Naive thymus-derived CD4-positive, alpha-beta T cell (primary cell): ENCODE measurements at regions of chr9 and their contacts with region 1.

Region 1: GRCh38 chr9:127802576-127803443 is at the start of gene FPGS:
- DNase-seq: peak; percentile 77 to 86 (median 85)
- ATAC-seq: peak; percentile 94
- H3K4me3 ChIP-seq: peak within 1 kb of the TSS; percentile 81
- H3K4me3 Mint-ChIP-seq: peak within 1 kb of the TSS; percentile 81 to 95 (median 90)
- H3K27ac ChIP-seq: peak within 1 kb of the TSS; percentile 93
- H3K27ac Mint-ChIP-seq: peak within 1 kb of the TSS; percentile 80 to 95 (median 89)
- H3K4me1 ChIP-seq: peaks cover 12 to 19% of the 10 kb centered on the region in 2 donors
- H3K4me1 Mint-ChIP-seq: peaks cover 4 to 31% (median 20%) of the 10 kb centered on the region in 7 donors
- H3K27me3 ChIP-seq: no peaks in the 10 kb centered on the region
- H3K27me3 Mint-ChIP-seq: no peaks in the 10 kb centered on the region
- total RNA-seq, gene FPGS: 90.4 to 123 (median 95.4) TPM

Region 2: DNA sequence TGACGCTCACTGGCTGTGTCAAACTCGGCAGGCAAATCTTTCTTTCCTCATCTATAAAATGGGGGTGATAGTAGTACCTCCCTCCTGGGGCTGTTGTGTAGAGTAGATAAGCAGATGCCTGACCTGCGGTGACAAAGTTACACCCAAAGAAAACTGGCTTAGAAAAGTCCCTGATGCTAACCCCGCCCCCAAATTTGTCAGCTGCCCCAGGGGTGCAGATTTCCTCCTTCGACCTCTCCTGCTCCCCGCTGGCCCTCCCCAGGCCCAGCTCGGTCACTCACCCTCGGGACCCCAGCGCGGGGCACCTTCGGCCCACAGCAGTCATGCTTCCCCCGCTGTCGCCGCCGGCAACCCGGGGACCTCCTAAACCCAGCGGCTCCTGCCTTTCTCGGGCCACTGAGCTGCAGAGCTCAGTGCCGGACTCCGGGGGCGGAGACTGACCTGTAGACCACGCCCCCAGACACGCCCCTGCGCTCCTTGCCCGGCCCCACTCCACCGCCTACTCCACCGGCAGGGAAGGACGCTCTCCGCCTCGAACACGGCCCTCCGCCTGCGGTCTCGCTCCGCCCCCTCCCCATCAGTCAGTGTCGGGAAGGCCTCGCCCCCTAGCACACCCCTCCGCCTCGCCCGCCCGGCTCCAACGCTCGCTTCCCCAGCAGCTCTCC is 31.8 kb before region 1 on chr9:
- CTCF ChIA-PET with region 1: no interaction called
- POLR2A ChIA-PET with region 1: interaction called, 6 read pairs
- intact Hi-C with region 1: loop called (anchors 1 kb)
- DNase-seq: peak; percentile 85 to 99 (median 92)
- ATAC-seq: peak; percentile 92
- H3K4me3 ChIP-seq: peak overlapping the region; percentile 71
- H3K4me3 Mint-ChIP-seq: peak overlapping the region; percentile 74 to 92 (median 86)
- H3K27ac ChIP-seq: peak overlapping the region; percentile 90
- H3K27ac Mint-ChIP-seq: peak overlapping the region; percentile 90 to 96 (median 94)
- H3K4me1 ChIP-seq: peaks cover 57 to 59% of the 10 kb centered on the region in 2 donors
- H3K4me1 Mint-ChIP-seq: peaks cover 44 to 82% (median 71%) of the 10 kb centered on the region in 7 donors
- H3K27me3 ChIP-seq: no peaks in the 10 kb centered on the region
- H3K27me3 Mint-ChIP-seq: no peaks in the 10 kb centered on the region

Region 3: DNA sequence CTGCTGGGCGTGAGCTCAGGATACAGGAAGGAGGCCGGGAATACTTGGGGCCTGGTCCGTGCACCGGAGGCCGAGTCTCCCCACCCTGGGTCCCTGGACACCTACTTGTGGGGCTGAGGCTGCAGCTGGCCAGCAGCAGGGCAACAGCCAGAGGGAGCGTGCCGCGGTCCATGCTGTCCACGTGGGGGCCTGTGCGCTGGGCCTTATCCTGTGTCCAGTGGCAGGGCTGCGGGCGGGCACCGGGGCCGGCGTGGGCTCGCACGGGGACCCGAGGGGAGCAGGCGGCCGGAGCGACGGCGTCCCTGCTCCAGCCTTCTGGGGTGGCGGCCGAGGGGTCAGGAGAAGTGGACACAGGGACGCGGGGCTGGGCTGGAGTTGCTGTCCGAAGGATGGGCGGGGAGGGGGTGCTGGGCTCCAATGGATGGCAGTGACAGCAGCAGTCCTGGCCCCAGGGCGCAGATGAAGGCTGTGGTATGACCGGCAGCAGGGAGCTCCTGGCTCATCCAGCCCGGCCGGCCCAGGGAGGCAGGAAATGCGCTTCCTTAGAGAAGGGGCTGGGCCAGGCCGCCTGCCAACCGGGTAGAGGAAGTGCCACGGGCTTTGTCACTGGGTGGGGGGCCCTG is 51.5 kb after region 1 on chr9 and contains the start of gene ENG:
- CTCF ChIA-PET with region 1: no interaction called
- POLR2A ChIA-PET with region 1: interaction called, 4 read pairs
- intact Hi-C with region 1: loop called in 1 of 2 experiments (anchors 5 kb)
- DNase-seq: peak in 2 of 9 donors; percentile 22 to 37
- ATAC-seq: peak; percentile 64
- H3K4me3 ChIP-seq: peak within 1 kb of the TSS; percentile 68
- H3K4me3 Mint-ChIP-seq: peak within 1 kb of the TSS; percentile 84 to 91 (median 90)
- H3K27ac ChIP-seq: peak within 1 kb of the TSS; percentile 75
- H3K27ac Mint-ChIP-seq: peak within 1 kb of the TSS; percentile 81 to 94 (median 88)
- H3K4me1 ChIP-seq: peaks cover 7 to 28% of the 10 kb centered on the region in 2 donors
- H3K4me1 Mint-ChIP-seq: peaks cover 13 to 46% (median 29%) of the 10 kb centered on the region in 7 donors
- H3K27me3 ChIP-seq: no peaks in the 10 kb centered on the region
- H3K27me3 Mint-ChIP-seq: no peaks in the 10 kb centered on the region
- total RNA-seq, gene ENG: 6.2 to 25.8 (median 12.5) TPM

Region 4: DNA sequence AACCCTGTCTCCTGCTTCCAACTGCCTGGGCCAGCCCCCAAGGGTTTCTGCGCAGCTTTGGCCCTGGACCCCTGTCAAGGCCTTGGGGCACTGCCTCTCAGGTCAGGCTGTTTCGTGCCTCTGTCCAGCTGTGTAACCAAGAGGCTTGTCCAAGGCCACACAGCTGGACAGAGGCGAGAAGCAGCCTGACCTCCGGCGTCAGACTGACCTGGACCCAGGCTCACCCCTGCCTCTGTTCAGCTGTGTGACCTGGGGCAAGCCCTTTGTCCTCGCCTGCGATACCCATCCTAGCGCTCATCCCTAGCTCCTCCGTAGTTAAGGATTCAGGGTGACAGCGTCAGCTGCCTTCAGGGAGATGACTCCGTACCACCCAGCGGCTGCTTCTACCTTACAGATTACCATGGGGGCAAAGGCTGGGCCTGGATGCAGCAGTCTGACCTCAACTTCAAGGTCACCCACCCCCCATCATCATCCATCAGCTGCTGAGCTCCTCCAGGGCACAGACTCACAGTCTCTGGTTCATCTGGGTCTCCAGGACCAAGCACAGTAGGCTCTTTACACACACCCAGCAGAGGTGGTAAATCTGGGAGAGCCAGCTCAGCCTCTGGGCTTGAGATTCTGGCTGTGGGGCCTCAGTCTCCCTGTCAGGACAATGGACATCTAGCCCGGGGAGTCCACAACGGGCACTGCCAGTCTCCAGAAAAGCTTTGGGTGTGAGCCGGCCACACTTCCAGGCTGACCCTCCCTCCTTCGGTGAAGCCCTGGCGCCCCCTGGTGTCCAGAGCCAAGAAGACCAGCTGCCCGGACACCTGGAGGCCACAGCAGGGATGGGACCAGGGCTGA is 66.7 kb after region 1 on chr9:
- CTCF ChIA-PET with region 1: interaction called, 4 read pairs
- POLR2A ChIA-PET with region 1: no interaction called
- intact Hi-C with region 1: loop called in 1 of 2 experiments (anchors 5 kb)
- DNase-seq: peak; percentile 44 to 91 (median 62)
- ATAC-seq: peak; percentile 85
- H3K4me3 ChIP-seq: no peak overlapping the region
- H3K4me3 Mint-ChIP-seq: no peak overlapping the region
- H3K27ac ChIP-seq: no peak overlapping the region
- H3K27ac Mint-ChIP-seq: peak overlapping the region in 1 of 9 donors; percentile 32
- H3K4me1 ChIP-seq: peaks cover 12 to 13% of the 10 kb centered on the region in 2 donors
- H3K4me1 Mint-ChIP-seq: peaks cover 12 to 19% (median 16%) of the 10 kb centered on the region in 7 donors
- H3K27me3 ChIP-seq: no peaks in the 10 kb centered on the region
- H3K27me3 Mint-ChIP-seq: no peaks in the 10 kb centered on the region

Region 5: GRCh38 chr9:127904561-127905003 is 101.8 kb after region 1 on chr9:
- CTCF ChIA-PET with region 1: no interaction called
- POLR2A ChIA-PET with region 1: interaction called, 4 read pairs
- intact Hi-C with region 1: loop called in 1 of 2 experiments (anchors 1 kb)
- DNase-seq: peak in 1 of 9 donors; percentile 29
- ATAC-seq: peak; percentile 2
- H3K4me3 ChIP-seq: peak overlapping the region; percentile 72
- H3K4me3 Mint-ChIP-seq: peak overlapping the region; percentile 86 to 98 (median 94)
- H3K27ac ChIP-seq: peak overlapping the region; percentile 95
- H3K27ac Mint-ChIP-seq: peak overlapping the region; percentile 96 to 100 (median 99)
- H3K4me1 ChIP-seq: peaks cover 35 to 49% of the 10 kb centered on the region in 2 donors
- H3K4me1 Mint-ChIP-seq: peaks cover 38 to 68% (median 52%) of the 10 kb centered on the region in 7 donors
- H3K27me3 ChIP-seq: no peaks in the 10 kb centered on the region
- H3K27me3 Mint-ChIP-seq: no peaks in the 10 kb centered on the region